ENCODE measurements at regions of chr15 and their contacts with region 1.

Region 1: GRCh38 chr15:70722266-70723121 is 40.9 kb downstream of the UACA start:
- DNase-seq: no peak
- ATAC-seq: no peak
- H3K4me3 Mint-ChIP-seq: no peak overlapping the region
- H3K27ac Mint-ChIP-seq: no peak overlapping the region
- H3K4me1 Mint-ChIP-seq: no peaks in the 10 kb centered on the region
- H3K27me3 Mint-ChIP-seq: peaks cover 26% of the 10 kb centered on the region

Region 2: DNA sequence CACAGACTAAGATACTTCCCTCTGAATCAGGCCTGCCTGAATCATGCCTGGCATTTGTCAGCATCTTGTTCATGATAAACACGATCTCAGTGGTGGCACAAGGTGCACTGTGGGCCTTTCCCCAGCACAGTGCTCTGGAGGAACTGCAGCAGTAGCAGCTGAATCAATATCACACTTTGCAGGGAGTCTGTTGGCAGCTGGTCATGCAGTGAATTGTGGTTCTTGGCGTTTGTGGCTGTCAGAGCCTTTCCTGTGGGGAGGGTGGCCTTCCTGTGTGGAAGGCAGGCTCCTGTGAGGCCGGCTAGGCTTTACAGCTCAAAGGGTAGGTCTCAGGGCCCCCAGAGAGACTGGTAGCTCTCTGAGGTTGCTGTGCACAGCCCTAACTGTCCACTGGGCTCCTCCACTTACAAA is 570.4 kb before region 1 on chr15:
- CTCF ChIA-PET with region 1: no interaction called
- DNase-seq: no peak
- ATAC-seq: no peak
- H3K4me3 Mint-ChIP-seq: no peak overlapping the region
- H3K27ac Mint-ChIP-seq: no peak overlapping the region
- H3K4me1 Mint-ChIP-seq: peaks cover 11% of the 10 kb centered on the region
- H3K27me3 Mint-ChIP-seq: peaks cover 44% of the 10 kb centered on the region

Region 3: DNA sequence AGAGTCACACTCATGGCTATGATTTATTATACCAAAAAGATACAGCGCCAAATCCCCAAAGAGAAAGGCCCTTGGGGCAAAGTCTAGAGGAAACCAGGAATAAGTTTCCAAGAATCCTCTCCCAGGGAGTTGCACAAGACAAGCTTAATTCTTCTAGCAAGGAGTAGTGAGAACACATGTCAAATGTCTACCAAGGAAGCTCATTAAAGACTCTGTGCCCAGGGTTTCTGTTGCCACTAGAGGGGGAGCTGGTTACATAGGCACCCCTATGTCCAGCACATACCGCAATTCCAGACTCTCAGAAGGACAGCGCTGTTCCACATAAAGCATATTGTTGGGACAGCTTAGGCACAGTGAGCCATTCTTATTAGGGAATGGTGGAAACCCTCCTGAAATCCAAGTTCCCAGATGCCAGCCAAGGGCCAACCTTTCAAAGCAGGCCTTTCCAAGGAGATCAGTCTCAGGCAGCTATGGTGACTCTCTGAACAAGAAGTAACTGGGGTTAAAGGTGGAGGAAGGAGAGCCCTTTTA is 153.3 kb before region 1 on chr15:
- CTCF ChIA-PET with region 1: interaction called, 12 read pairs
- DNase-seq: no peak
- ATAC-seq: no peak
- H3K4me3 Mint-ChIP-seq: no peak overlapping the region
- H3K27ac Mint-ChIP-seq: no peak overlapping the region
- H3K4me1 Mint-ChIP-seq: peaks cover 6% of the 10 kb centered on the region
- H3K27me3 Mint-ChIP-seq: peaks cover 26% of the 10 kb centered on the region

Region 4: GRCh38 chr15:70679919-70680231 is 42.6 kb before region 1 on chr15:
- CTCF ChIA-PET with region 1: interaction called, 64 read pairs
- DNase-seq: no peak
- ATAC-seq: no peak
- H3K4me3 Mint-ChIP-seq: no peak overlapping the region
- H3K27ac Mint-ChIP-seq: no peak overlapping the region
- H3K4me1 Mint-ChIP-seq: peaks cover 2% of the 10 kb centered on the region
- H3K27me3 Mint-ChIP-seq: peaks cover 53% of the 10 kb centered on the region

Region 5: GRCh38 chr15:70810916-70811578 is 88.6 kb after region 1 on chr15:
- CTCF ChIA-PET with region 1: interaction called, 10 read pairs
- DNase-seq: no peak
- ATAC-seq: no peak
- H3K4me3 Mint-ChIP-seq: no peak overlapping the region
- H3K27ac Mint-ChIP-seq: no peak overlapping the region
- H3K4me1 Mint-ChIP-seq: peaks cover 4% of the 10 kb centered on the region
- H3K27me3 Mint-ChIP-seq: peaks cover 7% of the 10 kb centered on the region